Transverse colon (tissue), 4 donors: ENCODE measurements at regions of chr12 and their contacts with region 1.

Region 1: GRCh38 chr12:26122681-26123481 is 2.0 kb downstream of the BHLHE41 start:
- DNase-seq: peak; percentile 75
- H3K4me3 ChIP-seq: peak overlapping the region; percentile 25 to 72 (median 56)
- H3K27ac ChIP-seq: peak overlapping the region; percentile 86 to 96 (median 90)
- H3K4me1 ChIP-seq: peaks cover 11 to 53% (median 26%) of the 10 kb centered on the region in 4 donors
- H3K27me3 ChIP-seq: peaks cover 48% of the 10 kb centered on the region
- CTCF ChIP-seq: peak in 4 of 5 experiments; percentile 11 to 25 (median 15)
- EP300 ChIP-seq: no peak
- POLR2A ChIP-seq: peak; percentile 46

Region 2: GRCh38 chr12:26195641-26196420 is 73.0 kb after region 1 on chr12:
- in situ Hi-C with region 1: no loop called
- intact Hi-C with region 1: loop called (anchors 5 kb)
- DNase-seq: peak; percentile 62
- H3K4me3 ChIP-seq: peak overlapping the region; percentile 54 to 83 (median 58)
- H3K27ac ChIP-seq: peak overlapping the region; percentile 83 to 86 (median 85)
- H3K4me1 ChIP-seq: peaks cover 0 to 30% (median 13%) of the 10 kb centered on the region in 4 donors
- H3K27me3 ChIP-seq: no peaks in the 10 kb centered on the region
- CTCF ChIP-seq: no peak
- EP300 ChIP-seq: no peak
- POLR2A ChIP-seq: peak; percentile 28